ENCODE measurements at regions of chr13 and their contacts with region 1.

Region 1: GRCh38 chr13:109510013-109510412 is 276.4 kb downstream of the IRS2 start:
- DNase-seq: peak; percentile 8 to 74
- H3K4me3 ChIP-seq: no peak overlapping the region
- H3K4me3 Mint-ChIP-seq: peak overlapping the region; percentile 23
- H3K27ac Mint-ChIP-seq: peak overlapping the region; percentile 55
- H3K4me1 ChIP-seq: peaks cover 16% of the 10 kb centered on the region; the same call in 1 of the 2 replicates
- H3K4me1 Mint-ChIP-seq: peaks cover 15% of the 10 kb centered on the region
- H3K27me3 ChIP-seq: no peaks in the 10 kb centered on the region
- H3K27me3 Mint-ChIP-seq: peaks cover 3% of the 10 kb centered on the region
- CTCF ChIP-seq: no peak

Region 2: DNA sequence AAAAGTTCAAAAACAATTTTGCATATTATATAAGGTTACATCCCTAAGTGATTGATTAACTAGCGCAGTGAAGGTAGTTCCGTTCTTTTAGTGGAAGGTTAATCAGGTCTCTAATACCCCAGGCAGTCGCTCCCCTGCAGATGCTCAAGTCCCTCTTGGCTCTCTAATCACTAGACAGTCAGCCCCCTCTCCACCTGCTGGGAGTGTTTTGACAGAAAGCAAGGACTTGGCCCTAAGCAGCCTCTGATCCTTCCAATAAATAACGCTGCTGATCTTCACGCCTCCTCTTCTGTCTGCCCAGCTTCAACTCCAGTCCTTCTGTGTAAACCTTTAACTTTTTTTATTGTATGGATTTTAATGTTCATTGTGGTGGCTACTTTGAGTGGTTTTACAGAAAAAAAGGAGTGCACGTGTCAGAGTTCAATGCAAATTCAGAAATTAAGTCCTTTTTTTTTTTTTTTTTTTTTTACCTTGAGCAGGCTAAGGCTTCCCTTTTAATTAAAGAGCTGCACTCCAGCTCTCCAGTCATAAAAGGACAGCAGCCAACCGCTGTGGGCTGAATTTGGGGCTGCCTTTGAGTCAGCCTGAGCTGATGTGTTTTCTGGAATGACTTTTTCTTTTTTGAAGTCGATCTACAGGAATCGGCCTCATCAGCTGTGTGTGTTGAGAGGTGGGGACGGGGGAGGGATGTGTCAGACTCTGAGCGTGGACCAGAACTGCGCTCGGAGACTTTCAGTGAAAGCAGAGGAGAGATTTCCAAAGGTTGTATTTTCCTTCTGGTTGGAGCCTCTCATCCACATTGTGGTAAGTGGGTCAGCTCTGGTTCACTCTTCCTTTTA is 914.4 kb before region 1 on chr13:
- CTCF ChIA-PET with region 1: no interaction called
- POLR2A ChIA-PET with region 1: no interaction called
- intact Hi-C with region 1: no loop called
- DNase-seq: no peak
- H3K4me3 ChIP-seq: no peak overlapping the region
- H3K4me3 Mint-ChIP-seq: no peak overlapping the region
- H3K27ac Mint-ChIP-seq: no peak overlapping the region
- H3K4me1 ChIP-seq: no peaks in the 10 kb centered on the region
- H3K4me1 Mint-ChIP-seq: no peaks in the 10 kb centered on the region
- H3K27me3 ChIP-seq: no peaks in the 10 kb centered on the region
- H3K27me3 Mint-ChIP-seq: peaks cover 6% of the 10 kb centered on the region
- CTCF ChIP-seq: no peak

Region 3: GRCh38 chr13:109400209-109400608 is 109.8 kb before region 1 on chr13:
- CTCF ChIA-PET with region 1: no interaction called
- POLR2A ChIA-PET with region 1: no interaction called
- intact Hi-C with region 1: no loop called
- DNase-seq: no peak
- H3K4me3 ChIP-seq: no peak overlapping the region
- H3K4me3 Mint-ChIP-seq: no peak overlapping the region
- H3K27ac Mint-ChIP-seq: no peak overlapping the region
- H3K4me1 ChIP-seq: no peaks in the 10 kb centered on the region
- H3K4me1 Mint-ChIP-seq: no peaks in the 10 kb centered on the region
- H3K27me3 ChIP-seq: no peaks in the 10 kb centered on the region
- H3K27me3 Mint-ChIP-seq: no peaks in the 10 kb centered on the region
- CTCF ChIP-seq: no peak

Region 4: GRCh38 chr13:109479991-109480691 is 29.9 kb before region 1 on chr13:
- CTCF ChIA-PET with region 1: no interaction called
- POLR2A ChIA-PET with region 1: no interaction called
- intact Hi-C with region 1: loop called (anchors 1 kb)
- DNase-seq: peak in 1 of 2 experiments; percentile 42
- H3K4me3 ChIP-seq: no peak overlapping the region
- H3K4me3 Mint-ChIP-seq: no peak overlapping the region
- H3K27ac Mint-ChIP-seq: no peak overlapping the region
- H3K4me1 ChIP-seq: peaks cover 13% of the 10 kb centered on the region
- H3K4me1 Mint-ChIP-seq: no peaks in the 10 kb centered on the region
- H3K27me3 ChIP-seq: no peaks in the 10 kb centered on the region; the same call in 1 of the 2 replicates
- H3K27me3 Mint-ChIP-seq: no peaks in the 10 kb centered on the region
- CTCF ChIP-seq: no peak

Region 5: DNA sequence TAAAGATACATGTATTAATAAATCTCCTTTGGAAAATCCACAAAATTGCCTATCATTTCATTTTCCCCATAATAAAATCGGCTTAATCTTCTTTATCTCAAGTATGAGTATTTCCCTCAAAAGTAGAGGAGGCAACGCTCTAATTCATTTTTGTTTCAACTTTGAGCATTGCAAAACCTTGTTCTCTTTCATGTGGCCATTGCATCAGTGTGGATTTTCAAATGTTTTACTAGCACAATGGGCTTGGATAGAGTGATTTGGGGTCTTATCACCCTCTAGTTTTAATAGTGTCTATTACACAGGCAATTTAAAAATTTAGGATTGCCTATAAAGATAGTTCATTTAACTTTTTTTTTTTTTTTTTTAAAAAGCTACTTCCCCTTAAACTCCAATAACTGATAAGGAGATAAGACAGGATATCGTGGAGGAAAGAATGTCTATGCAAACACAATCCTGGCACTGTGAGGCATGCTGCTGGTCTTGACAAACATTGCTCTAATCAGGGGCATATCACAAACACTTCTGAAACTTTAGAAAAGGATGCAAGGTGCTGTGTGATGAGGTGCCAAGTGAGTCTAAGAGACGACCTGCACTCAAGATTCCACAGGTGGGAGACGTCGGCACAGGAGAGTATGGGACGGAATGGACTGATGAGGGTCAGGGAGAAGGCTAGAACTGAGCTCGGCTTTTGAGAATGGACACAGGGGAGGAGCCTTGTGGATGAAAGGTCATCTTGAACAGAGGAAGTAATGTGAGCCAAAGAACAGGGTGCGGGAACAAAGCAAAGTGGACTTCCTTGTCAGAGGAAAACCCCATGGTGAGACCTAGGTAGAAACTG is 76.7 kb after region 1 on chr13:
- CTCF ChIA-PET with region 1: no interaction called
- POLR2A ChIA-PET with region 1: no interaction called
- intact Hi-C with region 1: loop called (anchors 2 kb)
- DNase-seq: peak; percentile 77 to 90
- H3K4me3 ChIP-seq: 0 out of 2 replicates have a peak overlapping the region, but pooled peaks have one; percentile 8
- H3K4me3 Mint-ChIP-seq: peak overlapping the region; percentile 64
- H3K27ac Mint-ChIP-seq: peak overlapping the region; percentile 77
- H3K4me1 ChIP-seq: peaks cover 30% of the 10 kb centered on the region
- H3K4me1 Mint-ChIP-seq: peaks cover 34% of the 10 kb centered on the region
- H3K27me3 ChIP-seq: no peaks in the 10 kb centered on the region
- H3K27me3 Mint-ChIP-seq: no peaks in the 10 kb centered on the region
- CTCF ChIP-seq: peak in 1 of 2 experiments; percentile 3

Region 6: GRCh38 chr13:109840201-109840892 is 330.3 kb after region 1 on chr13:
- CTCF ChIA-PET with region 1: no interaction called
- POLR2A ChIA-PET with region 1: no interaction called
- intact Hi-C with region 1: no loop called
- DNase-seq: no peak
- H3K4me3 ChIP-seq: no peak overlapping the region
- H3K4me3 Mint-ChIP-seq: no peak overlapping the region
- H3K27ac Mint-ChIP-seq: no peak overlapping the region
- H3K4me1 ChIP-seq: peaks cover 3% of the 10 kb centered on the region
- H3K4me1 Mint-ChIP-seq: no peaks in the 10 kb centered on the region
- H3K27me3 ChIP-seq: no peaks in the 10 kb centered on the region
- H3K27me3 Mint-ChIP-seq: peaks cover 4% of the 10 kb centered on the region
- CTCF ChIP-seq: no peak

Measured in Caco-2 (cell line).